Endothelial cell of umbilical vein (primary cell): ENCODE measurements at regions of chr6 and their contacts with region 1.

Region 1: DNA sequence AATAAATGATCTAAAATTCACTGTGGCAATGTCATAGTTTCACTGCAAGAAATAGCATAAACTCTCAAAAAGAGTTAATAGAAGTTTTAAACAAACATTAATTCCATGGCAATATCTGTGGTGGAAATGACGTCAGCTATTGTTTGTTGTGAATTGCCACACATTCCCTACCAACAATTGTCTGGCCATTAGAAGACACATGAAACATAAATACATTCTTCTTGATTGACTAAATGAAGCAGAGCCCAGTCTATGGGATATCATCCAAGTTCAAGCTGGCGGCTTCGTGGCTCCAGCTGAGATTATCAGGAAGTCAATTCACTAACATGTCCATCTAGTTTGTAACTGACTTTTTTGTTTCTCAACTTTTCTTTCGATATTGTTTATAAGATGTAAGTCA is 369.0 kb downstream of the ARHGAP18 start:
- DNase-seq: peak; percentile 90
- H3K4me3 ChIP-seq: no peak overlapping the region
- H3K27ac ChIP-seq: peak overlapping the region; percentile 62
- H3K4me1 ChIP-seq: peaks cover 29% of the 10 kb centered on the region
- H3K27me3 ChIP-seq: no peaks in the 10 kb centered on the region
- CTCF ChIP-seq: no peak
- POLR2A ChIP-seq: no peak

Region 2: GRCh38 chr6:129236001-129236517 is 104.9 kb before region 1 on chr6:
- CTCF ChIA-PET with region 1: no interaction called
- POLR2A ChIA-PET with region 1: no interaction called
- dilution Hi-C with region 1: no loop called
- intact Hi-C with region 1: no loop called
- DNase-seq: no peak
- H3K4me3 ChIP-seq: no peak overlapping the region
- H3K27ac ChIP-seq: no peak overlapping the region
- H3K4me1 ChIP-seq: no peaks in the 10 kb centered on the region
- H3K27me3 ChIP-seq: peaks cover 3 to 11% of the 10 kb centered on the region in 2 experiments
- CTCF ChIP-seq: no peak
- POLR2A ChIP-seq: no peak

Region 3: DNA sequence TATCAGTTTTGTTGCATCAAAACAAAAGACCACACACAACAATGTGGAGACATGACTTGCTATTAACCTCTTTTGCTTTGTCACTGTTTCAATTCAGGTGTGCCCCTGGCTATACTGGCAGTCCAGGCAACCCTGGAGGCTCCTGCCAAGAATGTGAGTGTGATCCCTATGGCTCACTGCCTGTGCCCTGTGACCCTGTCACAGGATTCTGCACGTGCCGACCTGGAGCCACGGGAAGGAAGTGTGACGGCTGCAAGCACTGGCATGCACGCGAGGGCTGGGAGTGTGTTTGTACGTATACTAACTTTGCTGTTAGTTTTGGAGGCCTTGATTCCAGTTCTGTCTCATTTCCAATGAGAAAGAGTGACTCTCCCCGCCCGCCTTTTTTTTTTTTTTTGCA is 12.1 kb after region 1 on chr6:
- CTCF ChIA-PET with region 1: interaction called, 4 read pairs
- POLR2A ChIA-PET with region 1: no interaction called
- dilution Hi-C with region 1: no loop called
- intact Hi-C with region 1: loop called (anchors 1 kb)
- DNase-seq: peak; percentile 80
- H3K4me3 ChIP-seq: no peak overlapping the region
- H3K27ac ChIP-seq: peak overlapping the region; percentile 60
- H3K4me1 ChIP-seq: peaks cover 11% of the 10 kb centered on the region
- H3K27me3 ChIP-seq: no peaks in the 10 kb centered on the region
- CTCF ChIP-seq: no peak
- POLR2A ChIP-seq: no peak

Region 4: DNA sequence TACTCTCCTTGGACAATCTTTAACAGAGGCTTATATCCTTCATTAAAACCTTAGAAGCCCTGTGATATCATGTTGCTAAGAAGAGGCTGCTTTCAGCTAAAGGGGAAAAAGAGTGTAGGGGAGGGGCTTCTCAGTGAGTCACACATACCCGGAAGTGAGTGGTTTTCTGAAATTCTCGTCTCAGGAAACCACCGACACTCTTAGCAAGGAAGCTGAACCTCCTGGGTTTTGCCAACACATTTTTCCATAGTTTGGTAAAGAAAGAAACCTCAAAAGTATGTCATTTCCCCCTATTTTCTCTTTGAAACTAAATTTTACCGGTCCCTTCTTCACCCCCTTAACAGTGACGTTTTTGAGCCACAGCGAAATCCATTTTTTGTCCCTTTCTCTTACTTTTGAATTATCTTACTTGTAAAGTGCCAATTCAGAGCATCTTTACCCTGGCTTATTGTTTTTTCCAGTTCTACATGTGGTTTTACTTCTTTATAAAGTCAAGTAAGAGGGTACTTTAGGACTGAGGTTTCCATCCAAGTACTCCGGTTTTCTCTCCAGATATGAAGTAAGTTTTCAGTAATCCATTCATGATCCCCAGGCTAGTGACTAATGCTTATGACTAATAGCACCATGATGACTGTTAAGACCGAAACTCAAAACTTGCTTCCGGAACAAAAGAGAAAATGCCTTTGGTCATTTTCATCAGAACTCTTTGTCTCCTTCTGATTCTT is 149.7 kb after region 1 on chr6:
- CTCF ChIA-PET with region 1: no interaction called
- POLR2A ChIA-PET with region 1: no interaction called
- dilution Hi-C with region 1: no loop called
- intact Hi-C with region 1: loop called (anchors 2 kb)
- DNase-seq: peak; percentile 95
- H3K4me3 ChIP-seq: peak overlapping the region; percentile 11 to 83 (median 41)
- H3K27ac ChIP-seq: peak overlapping the region; percentile 99
- H3K4me1 ChIP-seq: peaks cover 51% of the 10 kb centered on the region
- H3K27me3 ChIP-seq: no peaks in the 10 kb centered on the region
- CTCF ChIP-seq: no peak
- POLR2A ChIP-seq: peak; percentile 81